Transverse colon (tissue), 4 donors: ENCODE measurements at regions of chr1 and their contacts with region 1.

Region 1: GRCh38 chr1:65075123-65075976 is 72.7 kb upstream of the AK4 start:
- DNase-seq: peak; percentile 63
- H3K4me3 ChIP-seq: no peak overlapping the region
- H3K27ac ChIP-seq: no peak overlapping the region
- H3K4me1 ChIP-seq: no peaks in the 10 kb centered on the region
- H3K27me3 ChIP-seq: no peaks in the 10 kb centered on the region
- CTCF ChIP-seq: peak; percentile 67 to 76 (median 72)
- EP300 ChIP-seq: no peak
- POLR2A ChIP-seq: no peak

Region 2: GRCh38 chr1:64856553-64856952 is 218.8 kb before region 1 on chr1:
- in situ Hi-C with region 1: loop called in 2 of 4 experiments (anchors 10 kb)
- intact Hi-C with region 1: no loop called
- DNase-seq: peak; percentile 39
- H3K4me3 ChIP-seq: no peak overlapping the region
- H3K27ac ChIP-seq: peak overlapping the region in 1 of 4 donors; percentile 7
- H3K4me1 ChIP-seq: no peaks in the 10 kb centered on the region
- H3K27me3 ChIP-seq: no peaks in the 10 kb centered on the region
- CTCF ChIP-seq: no peak
- EP300 ChIP-seq: no peak
- POLR2A ChIP-seq: no peak

Region 3: DNA sequence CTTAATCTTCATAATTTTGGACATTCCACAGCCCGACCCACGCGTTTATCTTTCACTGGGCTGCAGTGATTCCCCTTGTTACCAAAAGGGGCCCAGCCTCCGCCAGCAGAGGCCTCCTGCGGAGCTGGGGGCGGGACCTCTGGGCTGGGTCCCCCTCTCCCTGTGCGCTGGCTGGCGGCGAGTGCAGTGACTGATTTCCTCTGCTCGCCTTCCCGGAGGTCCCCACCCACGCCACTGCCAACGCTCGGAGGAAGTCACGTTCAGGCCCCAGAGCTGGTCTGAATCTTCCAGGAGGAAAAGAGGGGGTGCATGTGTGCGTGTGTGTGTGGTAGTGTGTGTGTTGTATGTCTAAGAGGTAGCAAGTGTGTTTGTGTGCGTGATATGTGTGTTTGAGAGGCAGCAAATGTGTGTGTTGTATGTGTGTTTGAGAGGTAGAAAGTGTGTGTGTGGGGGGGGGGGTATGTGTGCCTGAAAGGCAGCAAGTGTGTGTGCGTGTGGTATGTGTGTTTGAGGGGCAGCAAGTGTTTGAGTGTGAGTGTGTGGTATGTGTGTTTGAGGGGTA is 74.0 kb before region 1 on chr1:
- in situ Hi-C with region 1: no loop called
- intact Hi-C with region 1: loop called (anchors 2 kb)
- DNase-seq: peak; percentile 72
- H3K4me3 ChIP-seq: no peak overlapping the region
- H3K27ac ChIP-seq: peak overlapping the region in 3 of 4 donors; percentile 87 to 92 (median 89)
- H3K4me1 ChIP-seq: peaks cover 0 to 14% (median 6%) of the 10 kb centered on the region in 4 donors
- H3K27me3 ChIP-seq: no peaks in the 10 kb centered on the region
- CTCF ChIP-seq: no peak
- EP300 ChIP-seq: no peak
- POLR2A ChIP-seq: peak; percentile 30

Region 4: GRCh38 chr1:65419681-65420589 is 344.6 kb after region 1 on chr1:
- in situ Hi-C with region 1: loop called in 2 of 4 experiments (anchors 25 kb)
- intact Hi-C with region 1: no loop called
- DNase-seq: peak; percentile 99
- H3K4me3 ChIP-seq: peak overlapping the region; percentile 12 to 99 (median 95)
- H3K27ac ChIP-seq: peak overlapping the region; percentile 96 to 100 (median 99)
- H3K4me1 ChIP-seq: peaks cover 8 to 33% (median 13%) of the 10 kb centered on the region in 4 donors
- H3K27me3 ChIP-seq: no peaks in the 10 kb centered on the region
- CTCF ChIP-seq: no peak
- EP300 ChIP-seq: no peak
- POLR2A ChIP-seq: peak; percentile 52

Region 5: DNA sequence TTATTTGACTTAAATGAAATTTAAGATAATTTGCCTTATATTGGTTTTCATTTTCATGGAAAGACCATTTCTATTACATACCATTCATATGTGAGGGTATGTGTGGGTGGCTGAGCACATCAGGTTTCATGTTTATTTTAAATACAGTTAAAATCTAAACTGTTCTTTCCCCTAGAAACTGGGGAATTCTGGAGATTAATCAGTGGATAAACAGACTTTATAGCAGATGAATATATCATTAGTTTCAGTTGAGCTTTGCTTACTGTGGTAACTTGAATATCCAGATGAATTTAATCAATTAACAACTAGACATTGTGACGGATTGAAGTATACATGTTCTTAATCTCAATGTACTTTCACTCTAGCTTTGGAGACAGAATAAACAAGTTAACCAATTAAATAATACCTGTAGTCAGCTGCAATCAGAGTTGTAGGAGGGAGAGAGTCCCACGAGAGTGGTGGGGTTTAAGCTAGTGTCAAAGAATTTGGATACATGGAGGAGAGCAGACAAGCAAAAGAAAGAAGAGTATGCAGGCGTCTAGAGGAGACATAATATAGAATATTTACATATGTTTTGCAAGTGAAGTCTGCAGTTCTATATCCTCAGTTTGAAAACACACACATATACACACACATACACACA is 815.0 kb after region 1 on chr1:
- in situ Hi-C with region 1: no loop called
- intact Hi-C with region 1: no loop called
- DNase-seq: no peak
- H3K4me3 ChIP-seq: no peak overlapping the region
- H3K27ac ChIP-seq: no peak overlapping the region
- H3K4me1 ChIP-seq: no peaks in the 10 kb centered on the region
- H3K27me3 ChIP-seq: no peaks in the 10 kb centered on the region
- CTCF ChIP-seq: no peak
- EP300 ChIP-seq: no peak
- POLR2A ChIP-seq: no peak